Left ventricle myocardium superior (tissue), 1 donor: ENCODE measurements at regions of chr20 and their contacts with region 1.

Region 1: DNA sequence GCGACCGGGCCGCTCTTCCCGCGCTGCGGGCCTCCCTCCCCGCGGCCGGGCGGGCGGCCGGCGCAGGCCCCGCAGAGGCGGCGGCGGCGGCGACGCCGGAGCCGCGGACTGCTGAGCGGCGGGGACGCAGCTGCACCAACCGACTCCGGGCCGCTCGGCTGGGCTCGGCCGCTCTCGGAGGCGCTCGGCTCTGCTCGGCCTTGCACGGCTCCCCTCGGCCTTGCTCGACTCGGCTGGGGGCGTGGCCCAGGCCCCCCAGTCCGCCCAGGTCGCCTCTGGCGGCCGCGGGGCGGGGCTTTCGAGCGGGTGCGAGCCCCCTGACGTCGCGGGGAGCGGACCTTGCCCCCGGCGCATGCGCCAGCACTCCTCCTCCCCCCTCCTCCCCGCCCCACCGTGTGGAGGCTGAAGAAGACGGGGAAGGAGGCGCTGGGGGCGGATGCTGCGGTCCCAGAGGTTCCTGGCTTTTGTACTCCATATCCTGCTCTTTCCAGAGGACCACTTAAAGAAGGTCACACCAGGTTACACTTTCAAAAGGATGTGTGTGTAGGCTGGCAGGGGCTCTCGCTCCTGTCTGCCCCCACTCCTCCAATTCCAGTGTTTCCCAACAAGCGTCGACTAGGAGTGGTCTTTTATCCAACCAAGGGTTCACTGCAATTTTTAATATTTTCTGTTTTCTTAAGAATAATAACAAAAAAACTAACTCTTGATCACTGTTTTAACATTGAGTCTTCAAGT is at the start of gene ZHX3:
- DNase-seq: peak; percentile 99
- ATAC-seq: peak; percentile 99
- total RNA-seq, gene ZHX3: 37.8 TPM

Region 2: GRCh38 chr20:41249406-41250281 is 68.1 kb before region 1 on chr20:
- intact Hi-C with region 1: loop called (anchors 10 kb)
- DNase-seq: peak; percentile 82
- ATAC-seq: peak; percentile 85

Region 3: DNA sequence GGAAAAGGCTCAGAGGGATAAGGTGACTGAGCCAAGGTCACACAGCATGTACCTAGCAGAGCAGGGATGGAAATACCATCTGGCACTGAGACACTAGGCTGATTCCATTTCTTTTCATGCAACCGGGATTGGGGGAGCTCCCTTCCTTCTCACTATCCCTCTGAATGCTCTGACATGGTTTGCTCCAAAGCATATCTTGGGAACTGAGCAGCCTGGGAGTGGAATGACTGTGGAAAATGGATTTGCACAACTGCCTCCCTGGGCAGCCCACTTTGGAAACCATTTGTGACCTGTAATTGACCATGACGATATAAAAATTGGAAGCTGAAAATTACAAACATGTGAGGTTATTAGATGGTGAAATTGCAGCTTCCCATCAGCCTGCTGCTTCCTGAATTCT is 609.5 kb after region 1 on chr20:
- intact Hi-C with region 1: no loop called
- DNase-seq: no peak
- ATAC-seq: no peak